Activated CD4-positive, alpha-beta memory T cell treated with anti-CD3 and anti-CD28 coated beads for 36 hours (primary cell): ENCODE measurements at regions of chr7 and their contacts with region 1.

Region 1: GRCh38 chr7:134690016-134690415 is 43.4 kb downstream of the BPGM start:
- DNase-seq: no peak
- H3K4me3 Mint-ChIP-seq: no peak overlapping the region
- H3K27ac Mint-ChIP-seq: no peak overlapping the region
- H3K4me1 Mint-ChIP-seq: no peaks in the 10 kb centered on the region
- H3K27me3 Mint-ChIP-seq: no peaks in the 10 kb centered on the region

Region 2: DNA sequence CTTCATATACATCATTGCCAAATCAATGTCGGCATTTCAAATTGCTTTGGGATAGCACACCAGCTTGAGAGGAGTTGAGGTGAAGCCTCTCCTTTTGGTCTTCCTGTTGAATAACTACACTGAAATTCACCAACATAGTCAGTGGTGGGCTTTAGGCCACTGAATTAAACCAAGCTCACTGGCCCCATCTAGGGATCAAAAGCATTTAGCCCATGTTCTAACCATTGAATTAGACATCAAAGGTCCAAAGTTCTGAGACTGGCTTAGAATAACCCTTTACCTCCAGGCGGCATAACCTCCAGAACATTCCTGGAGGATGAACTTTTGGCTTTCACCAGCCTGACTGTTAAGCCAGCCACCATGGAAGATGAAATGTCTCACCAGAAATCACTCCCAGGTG is 11.3 kb after region 1 on chr7:
- CTCF ChIA-PET with region 1: interaction called, 13 read pairs
- POLR2A ChIA-PET with region 1: no interaction called
- intact Hi-C with region 1: no loop called
- DNase-seq: no peak
- H3K4me3 Mint-ChIP-seq: no peak overlapping the region
- H3K27ac Mint-ChIP-seq: no peak overlapping the region
- H3K4me1 Mint-ChIP-seq: no peaks in the 10 kb centered on the region
- H3K27me3 Mint-ChIP-seq: no peaks in the 10 kb centered on the region